Naive thymus-derived CD4-positive, alpha-beta T cell (primary cell): ENCODE measurements at regions of chr5 and their contacts with region 1.

Region 1: DNA sequence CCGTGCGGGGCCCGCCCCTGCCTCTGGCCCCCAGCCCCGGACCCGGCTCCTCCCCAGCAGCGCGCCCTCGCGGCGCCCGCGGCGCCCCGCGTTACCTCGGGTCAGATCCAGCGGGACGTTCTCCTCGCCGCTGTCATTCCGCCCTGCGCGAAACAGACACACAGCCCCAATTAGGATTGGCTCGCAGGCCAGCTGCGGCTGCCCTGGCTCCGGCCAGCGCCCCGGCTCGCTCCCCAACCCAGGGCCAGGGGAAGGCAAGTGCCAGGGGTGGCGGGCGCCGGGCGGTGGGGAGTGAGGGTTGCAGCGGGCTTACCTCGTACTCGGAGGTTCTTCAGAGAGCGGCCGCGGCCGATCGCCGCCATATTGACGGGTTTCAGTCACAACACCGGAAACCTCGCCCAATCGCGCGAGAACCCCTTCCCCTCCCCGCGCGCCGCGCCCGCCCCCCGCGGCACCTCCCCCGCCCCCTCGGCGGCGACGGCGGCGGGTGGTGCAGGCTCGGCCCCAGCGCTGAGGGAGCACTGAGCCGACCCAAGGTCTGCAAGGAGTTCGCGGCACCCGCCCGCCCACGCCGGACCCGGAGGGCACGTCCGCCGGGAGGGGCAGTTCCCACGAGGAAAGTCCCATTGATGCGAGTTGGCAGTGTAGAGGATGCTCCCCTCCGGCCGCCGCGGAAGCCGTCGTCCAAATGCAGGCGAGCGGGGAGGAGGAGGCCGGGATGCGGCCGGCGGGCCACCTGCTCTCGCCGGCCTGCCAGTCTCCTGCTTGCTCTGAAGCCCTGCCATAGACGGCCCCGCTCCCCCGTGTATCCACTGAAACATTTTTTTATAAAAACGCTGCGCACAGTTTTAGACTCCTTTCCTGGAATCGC is at the start of gene RICTOR:
- DNase-seq: peak; percentile 83 to 95 (median 88)
- ATAC-seq: peak; percentile 86
- H3K4me3 ChIP-seq: peak within 1 kb of the TSS; percentile 70
- H3K4me3 Mint-ChIP-seq: peak within 1 kb of the TSS; percentile 89 to 99 (median 98)
- H3K27ac ChIP-seq: peak within 1 kb of the TSS; percentile 100
- H3K27ac Mint-ChIP-seq: peak within 1 kb of the TSS; percentile 95 to 99 (median 98)
- H3K4me1 ChIP-seq: peaks cover 12 to 17% of the 10 kb centered on the region in 2 donors
- H3K4me1 Mint-ChIP-seq: peaks cover 23 to 63% (median 51%) of the 10 kb centered on the region in 7 donors
- H3K27me3 ChIP-seq: peaks cover 11 to 12% of the 10 kb centered on the region in 2 donors
- H3K27me3 Mint-ChIP-seq: peaks cover 4 to 29% (median 16%) of the 10 kb centered on the region in 5 donors
- total RNA-seq, gene RICTOR: 56.9 to 96.2 (median 86.5) TPM

Region 2: GRCh38 chr5:38994324-38994927 is 79.8 kb before region 1 on chr5:
- CTCF ChIA-PET with region 1: interaction called, 5 read pairs
- POLR2A ChIA-PET with region 1: no interaction called
- intact Hi-C with region 1: loop called (anchors 1 to 2 kb)
- DNase-seq: peak in 7 of 9 donors; percentile 2 to 57 (median 39)
- ATAC-seq: peak; percentile 63
- H3K4me3 ChIP-seq: no peak overlapping the region
- H3K4me3 Mint-ChIP-seq: no peak overlapping the region
- H3K27ac ChIP-seq: no peak overlapping the region
- H3K27ac Mint-ChIP-seq: peak overlapping the region in 1 of 9 donors; percentile 75
- H3K4me1 ChIP-seq: no peaks in the 10 kb centered on the region
- H3K4me1 Mint-ChIP-seq: peaks cover 4 to 39% (median 25%) of the 10 kb centered on the region in 7 donors
- H3K27me3 ChIP-seq: no peaks in the 10 kb centered on the region
- H3K27me3 Mint-ChIP-seq: no peaks in the 10 kb centered on the region

Region 3: DNA sequence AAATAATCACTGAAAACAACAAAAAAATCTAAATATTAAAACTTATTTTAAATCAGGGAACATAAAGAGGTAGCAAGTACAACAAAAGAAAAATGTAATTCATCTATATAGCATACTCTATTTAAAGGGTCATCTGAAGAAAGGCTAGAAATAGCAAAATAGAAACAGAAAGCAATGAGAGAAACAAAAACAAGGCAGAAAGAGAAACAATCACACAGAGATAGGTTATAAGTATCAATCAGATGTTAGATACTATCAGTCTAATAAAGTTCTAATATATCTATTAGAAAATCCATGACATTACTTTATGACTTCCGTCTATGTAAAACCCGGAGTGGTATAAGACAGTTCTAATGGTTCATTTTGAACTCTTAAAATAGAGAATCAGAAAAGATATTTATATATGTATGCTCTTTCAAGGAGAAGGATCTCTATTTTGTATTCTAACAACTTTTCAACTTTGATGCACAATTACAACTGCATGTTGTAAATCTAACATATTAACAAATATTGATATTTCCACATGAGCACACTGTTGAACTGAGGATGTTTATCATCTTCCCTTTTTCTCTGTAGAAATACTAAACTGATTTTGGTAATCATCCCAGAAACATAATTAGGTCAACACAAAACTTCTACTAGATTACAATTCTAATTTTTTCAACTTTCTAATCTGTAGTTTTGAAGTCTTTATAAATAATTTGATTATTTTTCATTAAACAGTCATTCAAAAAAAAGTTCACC is 15.9 kb before region 1 on chr5:
- CTCF ChIA-PET with region 1: no interaction called
- POLR2A ChIA-PET with region 1: interaction called, 9 read pairs
- intact Hi-C with region 1: loop called (anchors 1 to 2 kb)
- DNase-seq: no peak
- ATAC-seq: no peak
- H3K4me3 ChIP-seq: peak overlapping the region; percentile 20
- H3K4me3 Mint-ChIP-seq: peak overlapping the region; percentile 15 to 79 (median 59)
- H3K27ac ChIP-seq: peak overlapping the region; percentile 41
- H3K27ac Mint-ChIP-seq: peak overlapping the region in 6 of 9 donors; percentile 0 to 80 (median 27)
- H3K4me1 ChIP-seq: peaks cover 11 to 31% of the 10 kb centered on the region in 2 donors
- H3K4me1 Mint-ChIP-seq: peaks cover 38 to 96% (median 79%) of the 10 kb centered on the region in 7 donors
- H3K27me3 ChIP-seq: no peaks in the 10 kb centered on the region
- H3K27me3 Mint-ChIP-seq: no peaks in the 10 kb centered on the region

Region 4: DNA sequence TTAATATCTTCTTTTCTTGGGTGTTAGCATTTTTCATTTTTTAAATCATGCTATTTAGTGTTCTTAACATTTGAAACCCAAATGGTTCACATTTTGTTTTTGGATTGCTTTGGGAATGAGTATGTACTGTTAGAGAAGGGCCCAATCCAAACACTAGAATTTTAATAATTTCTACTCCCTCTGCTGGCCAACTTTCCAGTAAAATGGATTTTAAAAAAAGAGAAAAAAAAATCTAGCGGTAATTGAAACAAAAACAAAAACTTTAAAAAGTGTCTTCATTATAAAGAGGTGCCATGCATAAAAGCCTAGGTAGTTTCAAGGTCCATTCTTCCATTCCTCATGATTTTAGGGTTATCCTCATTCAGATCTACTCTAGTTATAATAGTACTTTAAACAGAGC is 32.1 kb after region 1 on chr5:
- CTCF ChIA-PET with region 1: interaction called, 4 read pairs
- POLR2A ChIA-PET with region 1: no interaction called
- intact Hi-C with region 1: loop called in 1 of 2 experiments (anchors 5 kb)
- DNase-seq: peak in 3 of 9 donors; percentile 5 to 29 (median 22)
- ATAC-seq: no peak
- H3K4me3 ChIP-seq: no peak overlapping the region
- H3K4me3 Mint-ChIP-seq: no peak overlapping the region
- H3K27ac ChIP-seq: peak overlapping the region; percentile 23
- H3K27ac Mint-ChIP-seq: peak overlapping the region in 7 of 9 donors; percentile 9 to 67 (median 51)
- H3K4me1 ChIP-seq: peaks cover 0 to under 1% of the 10 kb centered on the region in 2 donors
- H3K4me1 Mint-ChIP-seq: peaks cover 4 to 52% (median 28%) of the 10 kb centered on the region in 7 donors
- H3K27me3 ChIP-seq: no peaks in the 10 kb centered on the region
- H3K27me3 Mint-ChIP-seq: no peaks in the 10 kb centered on the region

Region 5: DNA sequence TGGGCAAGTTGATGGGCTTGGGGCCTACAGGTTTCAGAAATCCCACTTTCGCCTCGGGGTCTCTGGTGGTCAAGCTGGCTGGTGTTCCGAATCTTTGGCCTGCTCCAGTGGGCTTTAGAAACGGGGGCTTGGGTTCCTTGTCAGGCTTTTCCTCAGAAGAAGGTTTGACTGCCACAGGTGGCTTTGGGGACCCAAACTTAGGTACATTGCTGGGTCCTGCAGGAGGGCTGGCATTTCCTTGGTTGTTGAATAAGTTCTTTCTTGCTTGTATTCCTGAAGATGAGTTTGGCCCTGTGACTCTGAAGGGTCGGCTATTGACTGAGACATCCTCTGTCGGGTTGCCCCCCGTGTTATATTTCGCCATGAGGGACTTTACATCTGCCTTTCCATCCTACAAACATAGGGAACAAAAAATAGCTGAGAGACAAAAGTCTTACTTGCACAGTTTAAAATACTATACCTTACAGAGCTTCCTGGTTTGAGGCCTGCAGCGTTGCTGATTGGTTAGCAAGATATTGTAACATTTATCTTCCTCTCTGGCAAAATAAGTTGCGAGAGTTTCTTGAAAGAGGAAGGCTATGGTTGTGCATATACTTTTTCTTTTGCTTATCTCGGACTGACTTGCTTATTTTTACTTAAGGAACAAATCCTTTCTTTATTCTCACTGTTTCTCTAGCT is 128.5 kb after region 1 on chr5:
- CTCF ChIA-PET with region 1: no interaction called
- POLR2A ChIA-PET with region 1: interaction called, 3 read pairs
- intact Hi-C with region 1: loop called (anchors 5 kb)
- DNase-seq: peak in 7 of 9 donors; percentile 57 to 72 (median 66)
- ATAC-seq: peak; percentile 82
- H3K4me3 ChIP-seq: peak overlapping the region; percentile 82
- H3K4me3 Mint-ChIP-seq: peak overlapping the region; percentile 75 to 100 (median 96)
- H3K27ac ChIP-seq: peak overlapping the region; percentile 93
- H3K27ac Mint-ChIP-seq: peak overlapping the region; percentile 86 to 99 (median 98)
- H3K4me1 ChIP-seq: peaks cover 43 to 48% of the 10 kb centered on the region in 2 donors
- H3K4me1 Mint-ChIP-seq: peaks cover 28 to 45% (median 44%) of the 10 kb centered on the region in 7 donors
- H3K27me3 ChIP-seq: no peaks in the 10 kb centered on the region
- H3K27me3 Mint-ChIP-seq: no peaks in the 10 kb centered on the region

Region 6: DNA sequence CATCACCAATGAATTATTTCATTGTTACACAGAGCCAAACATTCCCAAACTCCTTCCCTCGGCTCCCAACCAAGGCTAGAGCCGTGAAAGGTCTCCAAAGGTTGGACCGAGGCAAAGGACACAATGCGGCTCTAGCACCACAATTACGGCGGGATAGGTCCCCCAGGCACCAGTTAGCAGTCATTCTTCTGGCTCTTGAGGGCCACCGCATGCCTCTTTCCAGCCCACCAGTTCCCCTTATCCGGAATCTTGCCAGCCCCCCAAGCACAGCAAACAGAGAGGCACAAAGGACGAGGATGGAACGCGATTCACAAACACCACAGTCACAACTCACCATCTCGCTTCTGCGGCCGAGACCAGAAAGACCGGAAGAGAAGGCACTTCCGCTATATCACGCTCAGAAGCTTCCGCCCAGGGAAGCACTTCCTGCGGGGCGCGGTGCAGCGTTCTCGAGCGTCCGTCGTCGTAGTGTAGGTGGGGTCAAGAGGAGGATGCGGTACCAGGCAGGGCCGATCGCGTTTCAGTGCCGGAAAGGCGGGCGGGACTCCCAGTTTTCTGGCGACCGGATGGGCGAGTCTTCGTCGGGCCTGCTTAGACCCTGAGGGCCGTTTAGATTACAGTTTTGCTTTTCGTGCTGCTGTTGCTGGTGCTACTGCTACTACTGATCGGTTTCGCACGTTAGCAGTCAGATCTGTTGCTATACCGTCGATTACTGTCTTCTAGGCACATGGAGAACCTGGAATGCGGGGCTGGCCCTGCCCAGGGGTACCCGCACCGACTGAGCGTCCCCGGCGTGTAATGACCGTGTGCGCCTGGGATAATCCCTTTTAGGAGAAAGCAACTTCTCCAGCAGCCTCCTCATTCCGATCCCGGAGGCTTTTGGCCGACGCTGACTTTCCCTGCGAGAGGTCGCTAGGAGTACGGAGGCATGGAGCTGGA is 1760.9 kb after region 1 on chr5 and contains the start of gene RPL37:
- CTCF ChIA-PET with region 1: no interaction called
- POLR2A ChIA-PET with region 1: no interaction called
- intact Hi-C with region 1: loop called (anchors 5 to 10 kb)
- DNase-seq: peak; percentile 73 to 91 (median 88)
- ATAC-seq: peak; percentile 96
- H3K4me3 ChIP-seq: peak within 1 kb of the TSS; percentile 88
- H3K4me3 Mint-ChIP-seq: peak within 1 kb of the TSS; percentile 93 to 99 (median 98)
- H3K27ac ChIP-seq: peak within 1 kb of the TSS; percentile 92
- H3K27ac Mint-ChIP-seq: peak within 1 kb of the TSS; percentile 97 to 100 (median 99)
- H3K4me1 ChIP-seq: peaks cover 11 to 23% of the 10 kb centered on the region in 2 donors
- H3K4me1 Mint-ChIP-seq: peaks cover 21 to 58% (median 45%) of the 10 kb centered on the region in 7 donors
- H3K27me3 ChIP-seq: no peaks in the 10 kb centered on the region
- H3K27me3 Mint-ChIP-seq: no peaks in the 10 kb centered on the region
- total RNA-seq, gene RPL37: 1,642 to 2,808 (median 2,710) TPM